ENCODE measurements at regions of chr13 and their contacts with region 1.

Region 1: DNA sequence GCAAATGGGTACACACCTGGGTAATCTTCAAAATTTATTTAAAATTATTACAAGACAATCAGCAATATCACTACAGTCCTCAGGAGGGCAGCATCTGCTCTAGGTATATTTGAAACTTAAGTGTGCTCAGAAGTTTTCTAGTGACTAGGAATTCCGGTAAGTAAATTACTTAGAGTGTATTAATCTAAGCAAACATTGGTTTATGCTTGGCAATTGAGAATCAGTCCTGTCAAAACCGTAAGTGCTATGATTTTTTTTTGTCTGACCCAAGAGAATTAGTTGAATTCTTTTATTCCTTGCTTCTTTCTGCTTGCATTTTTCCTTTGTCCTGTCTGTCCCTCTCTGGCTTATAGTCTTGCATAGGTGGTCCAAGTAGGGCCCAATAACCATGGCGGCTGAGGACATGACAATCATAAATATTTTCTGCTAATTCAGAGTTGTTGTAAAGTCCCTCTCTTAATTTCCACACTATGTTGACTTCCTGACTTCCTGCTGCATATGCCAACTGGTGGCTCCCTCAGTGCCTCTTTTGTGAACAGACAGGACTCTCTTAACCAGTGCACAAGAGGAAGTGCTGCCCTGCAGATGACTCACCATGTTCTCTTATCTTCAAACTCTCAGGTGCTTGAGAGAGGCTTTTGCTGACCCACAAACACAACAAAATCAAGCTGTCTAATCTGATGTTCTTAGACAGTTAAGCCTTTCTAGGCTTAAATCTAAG is 82.2 kb downstream of the SLAIN1 start:
- DNase-seq: peak; percentile 73
- H3K4me3 Mint-ChIP-seq: no peak overlapping the region
- H3K27ac Mint-ChIP-seq: no peak overlapping the region
- H3K4me1 Mint-ChIP-seq: peaks cover 8% of the 10 kb centered on the region
- H3K27me3 Mint-ChIP-seq: no peaks in the 10 kb centered on the region

Region 2: GRCh38 chr13:77810430-77810829 is 30.7 kb after region 1 on chr13:
- intact Hi-C with region 1: loop called (anchors 2 kb)
- DNase-seq: peak; percentile 56
- H3K4me3 Mint-ChIP-seq: no peak overlapping the region
- H3K27ac Mint-ChIP-seq: no peak overlapping the region
- H3K4me1 Mint-ChIP-seq: no peaks in the 10 kb centered on the region
- H3K27me3 Mint-ChIP-seq: peaks cover 15% of the 10 kb centered on the region

Region 3: DNA sequence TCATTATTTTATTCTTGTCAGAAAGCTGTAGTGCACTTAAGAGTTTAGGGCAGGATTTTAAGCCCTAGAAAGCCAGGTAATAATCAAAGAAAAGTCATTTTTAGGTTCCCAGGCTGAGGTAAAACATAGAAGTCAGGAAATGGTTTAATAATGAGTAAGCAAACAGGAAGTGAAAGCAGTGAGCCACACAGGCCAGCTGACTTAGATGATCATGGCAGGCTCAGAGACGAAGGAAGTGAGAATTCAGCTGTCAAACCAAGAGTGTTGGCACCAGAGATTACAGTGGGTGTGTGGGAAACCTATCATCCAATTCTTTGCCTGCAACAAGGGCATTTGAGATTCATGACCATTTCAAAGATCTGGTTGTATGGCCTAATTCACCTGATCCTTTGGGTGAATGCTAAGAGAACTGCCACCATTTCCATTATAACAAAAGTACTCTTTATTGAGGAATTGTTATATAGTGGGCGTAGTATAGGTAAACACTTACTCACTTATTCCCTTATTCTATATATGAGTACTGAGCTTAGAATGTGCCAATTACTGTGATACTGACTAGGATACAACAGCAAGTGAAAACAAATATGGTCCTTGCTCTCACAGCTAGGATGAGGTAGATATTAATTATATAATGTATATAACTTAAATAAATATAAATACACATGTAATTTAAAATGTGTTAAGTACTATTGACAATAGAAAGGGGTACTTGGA is 242.6 kb after region 1 on chr13:
- intact Hi-C with region 1: loop called (anchors 10 kb)
- DNase-seq: peak; percentile 81
- H3K4me3 Mint-ChIP-seq: no peak overlapping the region
- H3K27ac Mint-ChIP-seq: peak overlapping the region; percentile 36
- H3K4me1 Mint-ChIP-seq: peaks cover 8% of the 10 kb centered on the region
- H3K27me3 Mint-ChIP-seq: peaks cover 12% of the 10 kb centered on the region

Region 4: DNA sequence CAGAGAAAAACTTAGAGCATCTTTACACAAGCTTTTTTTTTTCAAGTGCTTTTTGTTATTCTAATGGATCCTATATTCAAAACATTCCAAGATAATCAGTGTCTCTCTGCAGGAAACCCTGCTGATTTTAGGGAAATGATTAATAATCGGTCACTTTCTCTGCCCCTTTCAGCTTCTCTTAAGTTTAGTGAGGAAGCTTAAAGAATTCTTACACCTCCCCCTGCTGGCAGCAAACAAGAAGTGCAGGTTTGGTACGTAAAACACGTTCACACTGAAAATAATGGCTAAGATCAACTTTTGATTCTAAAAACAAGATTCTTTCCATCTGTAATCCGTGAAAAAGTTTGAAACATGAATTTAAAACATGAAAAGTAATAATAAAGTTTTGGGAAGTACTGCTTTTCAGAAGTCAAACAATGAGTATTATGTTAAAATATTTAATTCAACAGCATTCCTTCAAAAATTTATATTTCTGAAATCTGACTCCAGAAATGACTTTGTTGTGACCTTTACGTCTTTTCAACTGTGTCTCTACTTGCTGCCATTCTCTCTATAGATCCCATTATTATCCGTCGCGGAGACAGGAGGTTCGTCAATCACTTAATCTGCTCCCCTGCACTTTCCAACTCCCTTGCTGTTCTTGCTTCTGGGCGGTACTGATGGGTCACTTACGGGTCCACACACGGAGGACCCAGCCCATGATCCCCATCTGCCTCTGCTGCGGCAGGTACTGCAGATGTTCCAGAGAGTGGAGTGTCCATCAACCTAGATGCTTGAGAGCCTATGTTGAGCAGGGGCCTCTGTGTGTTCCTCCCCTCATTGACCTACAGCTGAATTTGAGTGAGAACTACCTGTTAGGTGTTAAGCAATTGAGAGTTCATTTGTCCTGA is 342.0 kb after region 1 on chr13:
- intact Hi-C with region 1: loop called (anchors 1 kb)
- DNase-seq: peak; percentile 76
- H3K4me3 Mint-ChIP-seq: no peak overlapping the region
- H3K27ac Mint-ChIP-seq: no peak overlapping the region
- H3K4me1 Mint-ChIP-seq: no peaks in the 10 kb centered on the region
- H3K27me3 Mint-ChIP-seq: peaks cover 3% of the 10 kb centered on the region